Endothelial cell of umbilical vein (primary cell): ENCODE measurements at regions of chr10 and their contacts with region 1.

Region 1: DNA sequence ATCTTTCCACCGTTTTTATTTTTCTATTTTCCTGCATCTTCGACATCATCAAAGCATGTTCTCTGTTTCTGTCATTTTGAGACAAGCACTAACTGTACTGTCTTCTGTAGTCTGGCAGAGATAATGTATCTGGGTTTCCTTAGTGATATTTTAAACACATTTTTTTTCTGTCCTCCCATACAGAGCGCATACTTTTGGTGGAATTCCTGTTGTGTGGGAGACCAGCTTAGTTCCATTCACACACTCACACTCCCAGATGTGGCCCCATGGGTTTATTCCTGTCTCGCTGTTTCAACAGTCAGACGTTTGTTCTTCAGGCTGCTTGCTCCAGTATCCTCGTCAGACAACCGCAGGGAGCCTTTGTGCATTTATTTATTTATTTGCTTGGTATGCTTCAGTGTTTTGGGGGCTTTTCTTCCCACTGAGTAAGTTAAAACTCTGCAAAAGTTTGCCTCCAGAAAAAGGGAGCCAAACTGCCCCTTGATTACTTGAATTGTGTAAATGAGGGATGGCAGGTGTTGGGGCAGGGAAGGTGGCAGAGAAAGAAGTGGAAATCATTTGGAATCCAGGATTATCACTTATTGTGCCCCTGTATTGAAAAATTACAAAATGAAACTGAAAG is 456.8 kb upstream of the KLF6 start:
- DNase-seq: peak; percentile 89
- H3K4me3 ChIP-seq: peak overlapping the region in 1 of 3 experiments; percentile 63
- H3K27ac ChIP-seq: peak overlapping the region; percentile 99
- H3K4me1 ChIP-seq: peaks cover 50% of the 10 kb centered on the region
- H3K27me3 ChIP-seq: no peaks in the 10 kb centered on the region
- CTCF ChIP-seq: no peak
- POLR2A ChIP-seq: no peak

Region 2: DNA sequence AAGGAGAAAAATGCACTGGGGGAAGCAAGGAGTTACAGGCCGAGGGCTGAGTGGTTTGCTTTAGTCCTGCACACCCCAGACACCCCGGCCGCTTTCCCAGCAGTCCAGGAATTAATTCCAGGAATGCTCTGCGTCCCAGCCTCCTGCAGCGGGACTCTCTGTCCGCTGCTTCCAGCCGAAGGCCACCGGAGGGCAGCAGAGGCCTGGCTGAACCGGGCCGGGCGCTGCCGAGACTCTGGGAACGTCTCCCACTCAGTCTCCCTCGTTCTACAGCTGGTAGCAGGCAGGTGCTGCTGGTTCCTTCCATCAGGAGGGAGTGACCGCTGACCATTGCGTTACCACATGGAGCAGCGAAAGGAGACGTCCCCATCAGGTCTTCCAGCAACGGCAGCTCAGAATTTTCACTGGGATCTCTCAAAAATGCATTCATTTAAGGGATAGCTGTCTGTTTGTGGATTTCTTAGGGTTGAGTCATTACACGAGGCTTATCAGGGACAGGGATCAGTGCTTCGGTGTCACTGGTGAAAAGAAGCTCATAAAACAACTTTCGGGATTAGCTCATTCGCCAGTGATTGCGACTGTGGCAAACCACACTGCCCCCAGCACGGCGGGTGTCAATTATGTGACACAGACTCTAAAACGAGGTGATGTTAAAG is 1044.4 kb before region 1 on chr10:
- CTCF ChIA-PET with region 1: interaction called, 3 read pairs
- POLR2A ChIA-PET with region 1: no interaction called
- dilution Hi-C with region 1: no loop called
- intact Hi-C with region 1: loop called (anchors 2 kb)
- DNase-seq: peak; percentile 86
- H3K4me3 ChIP-seq: peak overlapping the region in 2 of 3 experiments; percentile 1 to 6
- H3K27ac ChIP-seq: no peak overlapping the region
- H3K4me1 ChIP-seq: peaks cover 12% of the 10 kb centered on the region
- H3K27me3 ChIP-seq: peaks cover 0 to 6% of the 10 kb centered on the region in 2 experiments
- CTCF ChIP-seq: peak; percentile 93 to 96
- POLR2A ChIP-seq: no peak

Region 3: GRCh38 chr10:3785257-3785850 is 456.5 kb before region 1 on chr10:
- CTCF ChIA-PET with region 1: no interaction called
- POLR2A ChIA-PET with region 1: interaction called, 9 read pairs
- dilution Hi-C with region 1: no loop called
- intact Hi-C with region 1: loop called (anchors 1 kb)
- DNase-seq: peak; percentile 98
- H3K4me3 ChIP-seq: peak overlapping the region; percentile 22 to 95 (median 44)
- H3K27ac ChIP-seq: peak overlapping the region; percentile 98
- H3K4me1 ChIP-seq: peaks cover 26% of the 10 kb centered on the region
- H3K27me3 ChIP-seq: no peaks in the 10 kb centered on the region
- CTCF ChIP-seq: no peak
- POLR2A ChIP-seq: peak; percentile 99

Region 4: DNA sequence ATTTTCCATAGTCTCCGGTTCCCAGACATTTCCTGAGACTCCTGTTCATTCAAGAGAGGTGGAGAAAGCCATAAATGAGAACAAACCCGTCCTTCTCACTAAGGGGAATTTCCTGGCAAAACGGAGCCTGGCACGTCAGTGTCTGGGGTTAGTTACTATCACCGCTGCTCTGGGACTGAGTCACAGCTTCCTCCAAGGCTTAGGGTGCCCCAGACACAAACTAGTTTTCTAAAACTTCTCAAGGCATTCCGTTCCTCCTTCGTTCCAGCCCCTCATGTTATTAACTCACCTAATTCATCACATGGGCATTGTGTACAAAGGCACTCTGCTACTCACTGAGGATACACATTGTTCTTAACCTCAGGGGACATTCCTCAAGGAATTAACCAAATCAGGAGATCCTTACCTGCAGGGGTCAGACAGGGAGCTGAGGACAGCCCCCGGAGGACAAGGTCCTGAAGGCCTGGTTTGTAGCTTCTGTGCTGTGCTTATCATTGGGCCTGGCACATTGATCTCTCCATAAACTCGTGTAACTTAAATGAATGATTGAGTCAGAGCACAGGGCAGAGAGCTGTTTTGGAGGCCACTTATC is 353.9 kb before region 1 on chr10:
- CTCF ChIA-PET with region 1: no interaction called
- POLR2A ChIA-PET with region 1: no interaction called
- dilution Hi-C with region 1: no loop called
- intact Hi-C with region 1: loop called (anchors 1 kb)
- DNase-seq: peak; percentile 97
- H3K4me3 ChIP-seq: peak overlapping the region in 1 of 3 experiments; percentile 22
- H3K27ac ChIP-seq: peak overlapping the region; percentile 100
- H3K4me1 ChIP-seq: peaks cover 56% of the 10 kb centered on the region
- H3K27me3 ChIP-seq: no peaks in the 10 kb centered on the region
- CTCF ChIP-seq: no peak
- POLR2A ChIP-seq: peak; percentile 65

Region 5: DNA sequence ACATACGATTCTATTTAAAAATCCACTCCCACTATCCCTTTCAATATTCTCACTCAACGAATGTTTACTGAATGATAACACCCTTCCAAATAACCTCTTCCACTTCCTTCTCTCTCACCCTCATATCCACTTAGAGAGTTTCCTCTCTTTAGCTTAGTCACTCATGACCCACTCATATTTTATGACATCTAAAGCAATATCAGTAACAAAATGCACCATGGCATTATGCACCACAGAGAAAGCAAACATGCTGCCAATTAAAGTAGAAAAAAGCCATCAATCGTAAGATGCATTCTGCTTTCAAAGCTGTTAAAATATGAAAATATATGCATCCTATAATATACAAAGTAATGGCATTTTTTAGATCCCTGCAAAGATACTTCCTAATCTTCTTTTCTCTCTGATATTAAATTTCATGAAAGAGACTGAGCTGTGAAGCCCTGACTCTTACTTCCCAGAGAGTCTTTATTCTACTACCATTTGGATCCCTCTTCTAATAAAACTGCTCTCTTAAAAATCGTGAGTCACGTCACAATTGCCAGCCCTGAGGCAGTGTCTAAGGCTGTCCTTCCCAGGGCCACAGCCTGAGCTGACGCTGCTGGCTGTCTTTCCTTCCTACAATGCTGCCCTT is 173.8 kb before region 1 on chr10:
- CTCF ChIA-PET with region 1: no interaction called
- POLR2A ChIA-PET with region 1: no interaction called
- dilution Hi-C with region 1: no loop called
- intact Hi-C with region 1: loop called (anchors 2 kb)
- DNase-seq: peak; percentile 75
- H3K4me3 ChIP-seq: no peak overlapping the region
- H3K27ac ChIP-seq: peak overlapping the region; percentile 70
- H3K4me1 ChIP-seq: peaks cover 34% of the 10 kb centered on the region
- H3K27me3 ChIP-seq: no peaks in the 10 kb centered on the region
- CTCF ChIP-seq: no peak
- POLR2A ChIP-seq: no peak

Region 6: DNA sequence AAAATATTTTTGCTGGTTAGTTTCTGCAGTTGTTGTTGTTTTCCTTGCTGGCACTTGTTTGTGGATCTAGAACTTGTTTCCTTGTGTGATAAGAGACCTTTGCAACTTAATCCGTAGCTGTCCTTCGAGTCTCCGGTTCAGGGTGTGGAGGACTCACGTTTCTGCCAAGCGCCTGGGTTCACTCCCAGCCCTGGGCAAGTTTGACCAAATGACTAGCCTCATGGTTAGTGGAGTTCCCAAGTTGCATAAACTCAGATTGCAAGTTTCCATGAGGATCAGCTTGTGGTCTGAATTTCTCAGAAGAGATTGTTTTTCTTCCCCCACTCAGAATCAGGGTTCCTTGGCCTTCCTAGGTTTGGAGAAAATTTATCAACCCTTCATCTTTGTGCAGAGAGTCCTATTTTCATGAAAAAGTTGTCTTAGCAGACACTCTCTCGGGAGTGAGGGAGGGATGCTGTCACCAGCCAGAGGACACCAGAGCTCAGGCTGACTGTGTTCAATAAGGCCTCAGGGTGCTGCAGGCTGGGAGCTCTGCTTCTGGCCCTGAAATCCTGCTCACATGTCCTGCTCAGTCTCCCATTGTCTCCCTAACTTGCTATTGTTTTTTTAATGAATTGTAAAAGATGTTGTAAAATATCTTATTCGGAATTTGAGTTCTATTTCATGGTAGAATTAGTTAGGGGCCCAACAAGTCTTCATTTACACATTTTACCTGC is 79.1 kb before region 1 on chr10:
- CTCF ChIA-PET with region 1: no interaction called
- POLR2A ChIA-PET with region 1: no interaction called
- dilution Hi-C with region 1: no loop called
- intact Hi-C with region 1: no loop called
- DNase-seq: no peak
- H3K4me3 ChIP-seq: no peak overlapping the region
- H3K27ac ChIP-seq: no peak overlapping the region
- H3K4me1 ChIP-seq: no peaks in the 10 kb centered on the region
- H3K27me3 ChIP-seq: no peaks in the 10 kb centered on the region
- CTCF ChIP-seq: no peak
- POLR2A ChIP-seq: no peak

Region 7: DNA sequence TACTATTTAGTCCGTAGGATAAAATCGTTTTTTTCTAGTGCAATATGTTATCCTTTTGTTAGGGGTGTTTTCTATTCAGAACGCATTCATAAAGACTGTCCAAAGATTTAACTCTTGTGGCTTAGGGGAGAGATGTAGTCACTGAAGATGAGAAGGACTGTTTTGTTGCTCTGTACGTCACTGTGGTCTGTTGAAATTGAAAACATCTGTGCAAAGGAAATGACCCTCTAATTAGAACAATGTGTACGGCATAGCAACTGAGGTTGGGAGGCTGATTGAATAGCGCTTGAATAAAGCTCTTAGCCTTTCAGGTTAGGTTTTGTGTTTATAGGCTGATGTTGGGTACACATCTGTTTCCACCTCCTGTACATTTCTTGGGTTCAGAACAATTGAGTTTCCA is 130.8 kb after region 1 on chr10:
- CTCF ChIA-PET with region 1: no interaction called
- POLR2A ChIA-PET with region 1: no interaction called
- dilution Hi-C with region 1: no loop called
- intact Hi-C with region 1: loop called (anchors 1 kb)
- DNase-seq: peak; percentile 93
- H3K4me3 ChIP-seq: no peak overlapping the region
- H3K27ac ChIP-seq: peak overlapping the region; percentile 91
- H3K4me1 ChIP-seq: peaks cover 14% of the 10 kb centered on the region
- H3K27me3 ChIP-seq: no peaks in the 10 kb centered on the region
- CTCF ChIP-seq: no peak
- POLR2A ChIP-seq: no peak

Region 8: GRCh38 chr10:4407783-4408182 is 165.9 kb after region 1 on chr10:
- CTCF ChIA-PET with region 1: no interaction called
- POLR2A ChIA-PET with region 1: no interaction called
- dilution Hi-C with region 1: no loop called
- intact Hi-C with region 1: no loop called
- DNase-seq: peak; percentile 55
- H3K4me3 ChIP-seq: no peak overlapping the region
- H3K27ac ChIP-seq: no peak overlapping the region
- H3K4me1 ChIP-seq: peaks cover 6% of the 10 kb centered on the region
- H3K27me3 ChIP-seq: no peaks in the 10 kb centered on the region
- CTCF ChIP-seq: no peak
- POLR2A ChIP-seq: no peak

Region 9: GRCh38 chr10:4459531-4459930 is 217.7 kb after region 1 on chr10:
- CTCF ChIA-PET with region 1: no interaction called
- POLR2A ChIA-PET with region 1: no interaction called
- dilution Hi-C with region 1: no loop called
- intact Hi-C with region 1: no loop called
- DNase-seq: no peak
- H3K4me3 ChIP-seq: no peak overlapping the region
- H3K27ac ChIP-seq: no peak overlapping the region
- H3K4me1 ChIP-seq: no peaks in the 10 kb centered on the region
- H3K27me3 ChIP-seq: no peaks in the 10 kb centered on the region
- CTCF ChIP-seq: no peak
- POLR2A ChIP-seq: no peak

Region 10: GRCh38 chr10:4663162-4663904 is 421.5 kb after region 1 on chr10:
- CTCF ChIA-PET with region 1: no interaction called
- POLR2A ChIA-PET with region 1: no interaction called
- dilution Hi-C with region 1: no loop called
- intact Hi-C with region 1: loop called (anchors 2 kb)
- DNase-seq: peak; percentile 97
- H3K4me3 ChIP-seq: no peak overlapping the region
- H3K27ac ChIP-seq: peak overlapping the region; percentile 97
- H3K4me1 ChIP-seq: peaks cover 23% of the 10 kb centered on the region
- H3K27me3 ChIP-seq: no peaks in the 10 kb centered on the region
- CTCF ChIP-seq: no peak
- POLR2A ChIP-seq: peak; percentile 65